Naive thymus-derived CD4-positive, alpha-beta T cell (primary cell): ENCODE measurements at regions of chrX and their contacts with region 1.

Region 1: DNA sequence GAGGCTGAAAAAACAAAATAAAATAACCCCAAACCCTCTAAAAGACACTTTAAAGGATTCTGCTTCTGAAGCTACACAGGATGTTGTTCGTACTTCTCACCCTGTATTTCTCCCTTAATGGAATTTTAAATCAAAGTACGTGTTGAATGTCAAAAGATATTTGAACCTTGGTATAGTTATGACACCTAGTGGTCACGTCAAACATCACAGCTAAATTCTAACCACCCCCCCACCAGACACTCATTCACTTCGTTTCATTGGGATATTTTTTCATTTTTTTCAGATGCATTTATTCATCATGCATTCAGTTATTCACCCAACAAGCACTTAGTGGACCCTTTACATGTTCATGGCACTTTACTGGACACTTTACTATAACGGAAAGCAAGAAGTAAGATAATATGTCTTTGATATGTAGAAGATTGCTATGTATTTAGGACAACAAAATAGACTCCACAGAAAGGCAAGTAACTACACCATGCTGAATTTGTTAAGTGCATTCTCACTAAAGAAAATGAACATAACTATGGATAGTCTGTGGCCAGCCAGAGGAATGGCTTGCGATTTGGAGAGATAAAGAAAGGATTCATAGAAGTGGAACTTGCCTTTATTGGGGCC is 62.5 kb upstream of the GPR174 start:
- DNase-seq: peak in 7 of 9 donors; percentile 35 to 78 (median 67)
- ATAC-seq: peak; percentile 92
- H3K4me3 ChIP-seq: peak overlapping the region; percentile 25
- H3K4me3 Mint-ChIP-seq: peak overlapping the region; percentile 54 to 87 (median 72)
- H3K27ac ChIP-seq: peak overlapping the region; percentile 54
- H3K27ac Mint-ChIP-seq: peak overlapping the region; percentile 79 to 97 (median 87)
- H3K4me1 ChIP-seq: peaks cover 5 to 9% of the 10 kb centered on the region in 2 donors
- H3K4me1 Mint-ChIP-seq: peaks cover 4 to 52% (median 25%) of the 10 kb centered on the region in 7 donors
- H3K27me3 ChIP-seq: no peaks in the 10 kb centered on the region
- H3K27me3 Mint-ChIP-seq: no peaks in the 10 kb centered on the region

Region 2: GRCh38 chrX:77910108-77910840 is 1171.7 kb before region 1 on chrX and contains the start of gene ATP7A:
- CTCF ChIA-PET with region 1: no interaction called
- POLR2A ChIA-PET with region 1: no interaction called
- intact Hi-C with region 1: loop called in 1 of 2 experiments (anchors 2 kb)
- DNase-seq: peak; percentile 62 to 94 (median 88)
- ATAC-seq: peak; percentile 97
- H3K4me3 ChIP-seq: peak within 1 kb of the TSS; percentile 98
- H3K4me3 Mint-ChIP-seq: peak within 1 kb of the TSS; percentile 91 to 100 (median 96)
- H3K27ac ChIP-seq: peak within 1 kb of the TSS; percentile 93
- H3K27ac Mint-ChIP-seq: peak within 1 kb of the TSS; percentile 94 to 99 (median 98)
- H3K4me1 ChIP-seq: peaks cover 3 to 10% of the 10 kb centered on the region in 2 donors
- H3K4me1 Mint-ChIP-seq: peaks cover 6 to 28% (median 16%) of the 10 kb centered on the region in 7 donors
- H3K27me3 ChIP-seq: no peaks in the 10 kb centered on the region
- H3K27me3 Mint-ChIP-seq: no peaks in the 10 kb centered on the region
- total RNA-seq, gene ATP7A: 10.9 to 17.4 (median 17.0) TPM

Region 3: GRCh38 chrX:78321809-78322208 is 760.2 kb before region 1 on chrX:
- CTCF ChIA-PET with region 1: no interaction called
- POLR2A ChIA-PET with region 1: no interaction called
- intact Hi-C with region 1: loop called in 1 of 2 experiments (anchors 10 kb)
- DNase-seq: peak in 7 of 9 donors; percentile 57 to 80 (median 72)
- ATAC-seq: peak; percentile 91
- H3K4me3 ChIP-seq: no peak overlapping the region
- H3K4me3 Mint-ChIP-seq: peak overlapping the region; percentile 66 to 95 (median 75)
- H3K27ac ChIP-seq: peak overlapping the region; percentile 55
- H3K27ac Mint-ChIP-seq: peak overlapping the region; percentile 80 to 99 (median 91)
- H3K4me1 ChIP-seq: peaks cover 16 to 23% of the 10 kb centered on the region in 2 donors
- H3K4me1 Mint-ChIP-seq: peaks cover 16 to 57% (median 45%) of the 10 kb centered on the region in 7 donors
- H3K27me3 ChIP-seq: no peaks in the 10 kb centered on the region
- H3K27me3 Mint-ChIP-seq: no peaks in the 10 kb centered on the region

Region 4: GRCh38 chrX:78455901-78456300 is 626.1 kb before region 1 on chrX:
- CTCF ChIA-PET with region 1: no interaction called
- POLR2A ChIA-PET with region 1: no interaction called
- intact Hi-C with region 1: no loop called
- DNase-seq: no peak
- ATAC-seq: no peak
- H3K4me3 ChIP-seq: no peak overlapping the region
- H3K4me3 Mint-ChIP-seq: no peak overlapping the region
- H3K27ac ChIP-seq: no peak overlapping the region
- H3K27ac Mint-ChIP-seq: no peak overlapping the region
- H3K4me1 ChIP-seq: no peaks in the 10 kb centered on the region
- H3K4me1 Mint-ChIP-seq: no peaks in the 10 kb centered on the region
- H3K27me3 ChIP-seq: no peaks in the 10 kb centered on the region
- H3K27me3 Mint-ChIP-seq: no peaks in the 10 kb centered on the region

Region 5: DNA sequence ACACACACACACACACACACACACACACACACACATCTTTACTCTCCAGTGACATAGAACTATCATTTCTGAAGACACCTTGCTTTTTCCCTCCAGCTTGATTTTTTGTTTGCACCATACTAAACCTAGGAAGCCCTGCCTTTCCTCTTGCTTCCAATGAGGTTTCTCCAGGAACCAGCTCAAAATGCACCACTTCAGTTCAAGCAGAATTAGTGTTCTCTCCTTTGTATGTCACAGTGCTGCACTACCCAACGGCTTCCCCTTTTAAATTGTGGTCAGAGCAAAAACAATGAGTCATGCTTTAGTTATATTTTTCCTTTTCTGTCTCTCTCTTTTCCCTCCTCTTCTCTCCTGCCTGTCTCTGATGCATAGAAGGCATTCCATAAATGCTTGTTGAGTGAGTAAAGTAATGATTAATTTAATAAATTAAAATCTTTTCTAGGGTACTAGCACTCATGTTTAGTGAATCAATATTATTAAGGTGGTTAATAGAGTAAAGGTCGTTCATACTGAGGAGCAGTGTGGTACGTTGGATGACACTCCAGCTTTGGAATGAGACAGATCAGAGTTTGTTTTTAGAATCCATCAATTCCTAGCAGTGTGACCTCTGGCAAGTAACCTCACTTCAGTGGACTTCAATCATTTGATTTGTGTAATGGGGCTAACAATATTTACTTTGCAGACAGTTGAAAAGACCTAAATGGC is 428.7 kb before region 1 on chrX:
- CTCF ChIA-PET with region 1: no interaction called
- POLR2A ChIA-PET with region 1: no interaction called
- intact Hi-C with region 1: loop called in 1 of 2 experiments (anchors 10 kb)
- DNase-seq: no peak
- ATAC-seq: peak; percentile 57
- H3K4me3 ChIP-seq: no peak overlapping the region
- H3K4me3 Mint-ChIP-seq: peak overlapping the region in 1 of 10 donors; percentile 74
- H3K27ac ChIP-seq: no peak overlapping the region
- H3K27ac Mint-ChIP-seq: peak overlapping the region in 1 of 9 donors; percentile 53
- H3K4me1 ChIP-seq: peaks cover 12 to 13% of the 10 kb centered on the region in 2 donors
- H3K4me1 Mint-ChIP-seq: peaks cover 11 to 35% (median 23%) of the 10 kb centered on the region in 7 donors
- H3K27me3 ChIP-seq: no peaks in the 10 kb centered on the region
- H3K27me3 Mint-ChIP-seq: no peaks in the 10 kb centered on the region

Region 6: DNA sequence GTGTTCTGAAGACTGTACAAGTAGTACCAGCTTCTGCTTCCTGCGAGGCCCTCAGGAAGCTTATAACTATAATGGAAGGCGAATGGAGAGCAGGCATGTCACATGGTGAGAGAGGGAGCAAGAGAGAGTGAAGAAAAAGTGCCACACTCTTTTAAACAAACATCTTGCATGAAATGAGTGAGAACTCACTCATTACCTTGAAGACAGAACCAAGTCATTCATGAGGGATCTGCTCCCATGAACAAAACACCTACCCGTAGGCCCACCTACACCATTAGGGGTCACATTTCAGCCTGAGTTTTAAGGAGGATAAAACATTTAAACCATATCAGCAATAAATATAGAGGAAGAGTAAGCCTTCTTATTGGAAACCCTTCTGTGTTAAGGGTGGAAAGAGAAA is 117.4 kb before region 1 on chrX:
- CTCF ChIA-PET with region 1: no interaction called
- POLR2A ChIA-PET with region 1: no interaction called
- intact Hi-C with region 1: loop called in 1 of 2 experiments (anchors 5 kb)
- DNase-seq: no peak
- ATAC-seq: no peak
- H3K4me3 ChIP-seq: no peak overlapping the region
- H3K4me3 Mint-ChIP-seq: no peak overlapping the region
- H3K27ac ChIP-seq: no peak overlapping the region
- H3K27ac Mint-ChIP-seq: peak overlapping the region; percentile 50 to 89 (median 74)
- H3K4me1 ChIP-seq: no peaks in the 10 kb centered on the region
- H3K4me1 Mint-ChIP-seq: peaks cover 0 to 43% (median 29%) of the 10 kb centered on the region in 7 donors
- H3K27me3 ChIP-seq: no peaks in the 10 kb centered on the region
- H3K27me3 Mint-ChIP-seq: no peaks in the 10 kb centered on the region

Region 7: GRCh38 chrX:79107891-79108718 is 26.1 kb after region 1 on chrX:
- CTCF ChIA-PET with region 1: interaction called, 13 read pairs
- POLR2A ChIA-PET with region 1: interaction called, 7 read pairs
- intact Hi-C with region 1: loop called in 1 of 2 experiments (anchors 1 kb)
- DNase-seq: peak in 8 of 9 donors; percentile 5 to 79 (median 67)
- ATAC-seq: peak; percentile 97
- H3K4me3 ChIP-seq: peak overlapping the region; percentile 10
- H3K4me3 Mint-ChIP-seq: peak overlapping the region; percentile 50 to 81 (median 70)
- H3K27ac ChIP-seq: peak overlapping the region; percentile 87
- H3K27ac Mint-ChIP-seq: peak overlapping the region; percentile 94 to 99 (median 96)
- H3K4me1 ChIP-seq: peaks cover 27 to 50% of the 10 kb centered on the region in 2 donors
- H3K4me1 Mint-ChIP-seq: peaks cover 13 to 76% (median 64%) of the 10 kb centered on the region in 7 donors
- H3K27me3 ChIP-seq: no peaks in the 10 kb centered on the region
- H3K27me3 Mint-ChIP-seq: no peaks in the 10 kb centered on the region

Region 8: GRCh38 chrX:79270401-79270800 is 188.4 kb after region 1 on chrX:
- CTCF ChIA-PET with region 1: interaction called, 4 read pairs
- POLR2A ChIA-PET with region 1: interaction called, 3 read pairs
- intact Hi-C with region 1: loop called (anchors 1 kb)
- DNase-seq: peak; percentile 29 to 76 (median 68)
- ATAC-seq: peak; percentile 98
- H3K4me3 ChIP-seq: no peak overlapping the region
- H3K4me3 Mint-ChIP-seq: peak overlapping the region; percentile 17 to 77 (median 56)
- H3K27ac ChIP-seq: peak overlapping the region; percentile 61
- H3K27ac Mint-ChIP-seq: peak overlapping the region in 8 of 9 donors; percentile 84 to 94 (median 90)
- H3K4me1 ChIP-seq: peaks cover 24 to 34% of the 10 kb centered on the region in 2 donors
- H3K4me1 Mint-ChIP-seq: peaks cover 13 to 68% (median 45%) of the 10 kb centered on the region in 7 donors
- H3K27me3 ChIP-seq: no peaks in the 10 kb centered on the region
- H3K27me3 Mint-ChIP-seq: no peaks in the 10 kb centered on the region